ENCODE measurements at regions of chr19 and their contacts with region 1.

Region 1: GRCh38 chr19:6516659-6517291 is 14.1 kb upstream of the TNFSF9 start:
- DNase-seq: peak; percentile 97
- ATAC-seq: peak; percentile 86
- H3K4me3 Mint-ChIP-seq: peak overlapping the region; percentile 79
- H3K27ac Mint-ChIP-seq: peak overlapping the region; percentile 92
- H3K4me1 Mint-ChIP-seq: peaks cover 34% of the 10 kb centered on the region
- H3K27me3 Mint-ChIP-seq: peaks cover 2% of the 10 kb centered on the region

Region 2: GRCh38 chr19:6481541-6482342 is 35.0 kb before region 1 on chr19 and contains the start of gene DENND1C:
- CTCF ChIA-PET with region 1: no interaction called
- POLR2A ChIA-PET with region 1: no interaction called
- intact Hi-C with region 1: loop called in 1 of 2 experiments (anchors 1 kb)
- DNase-seq: peak; percentile 84
- ATAC-seq: peak; percentile 79
- H3K4me3 Mint-ChIP-seq: peak within 1 kb of the TSS; percentile 88
- H3K27ac Mint-ChIP-seq: peak within 1 kb of the TSS; percentile 96
- H3K4me1 Mint-ChIP-seq: peaks cover 25% of the 10 kb centered on the region
- H3K27me3 Mint-ChIP-seq: no peaks in the 10 kb centered on the region
- total RNA-seq, gene DENND1C: 49.5 to 56.3 TPM

Region 3: DNA sequence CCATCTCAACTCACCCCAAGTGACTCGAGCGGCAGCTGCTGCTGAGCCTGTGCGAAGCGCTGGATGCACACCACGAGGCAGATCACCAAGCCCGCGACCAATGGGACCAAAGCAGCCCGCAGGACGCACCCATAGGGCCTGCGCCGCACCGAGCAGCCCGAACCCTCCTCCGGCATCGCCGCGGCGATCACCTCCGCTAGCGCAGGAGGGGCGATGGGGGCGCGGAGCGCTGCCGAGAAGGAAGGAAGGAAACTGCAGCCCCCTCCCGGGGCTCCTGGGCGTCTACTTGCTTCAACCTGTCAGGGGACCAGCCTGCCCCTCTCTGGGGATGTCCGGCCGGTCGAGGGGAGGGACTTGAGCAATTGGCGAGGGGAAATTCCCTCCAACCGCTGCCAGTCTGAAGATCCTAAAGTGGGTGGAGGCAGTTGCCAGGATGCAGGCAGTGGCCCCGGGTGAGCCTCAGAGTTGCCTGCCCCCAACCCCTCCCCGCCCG is 74.1 kb after region 1 on chr19 and contains the start of gene CD70:
- CTCF ChIA-PET with region 1: interaction called, 4 read pairs
- POLR2A ChIA-PET with region 1: no interaction called
- intact Hi-C with region 1: loop called in 1 of 2 experiments (anchors 2 kb)
- DNase-seq: peak; percentile 75
- ATAC-seq: peak; percentile 75
- H3K4me3 Mint-ChIP-seq: peak within 1 kb of the TSS; percentile 67
- H3K27ac Mint-ChIP-seq: no peak within 1 kb of the TSS
- H3K4me1 Mint-ChIP-seq: peaks cover 64% of the 10 kb centered on the region
- H3K27me3 Mint-ChIP-seq: peaks cover 65% of the 10 kb centered on the region
- total RNA-seq, gene CD70: 3.3 to 3.6 TPM

Region 4: DNA sequence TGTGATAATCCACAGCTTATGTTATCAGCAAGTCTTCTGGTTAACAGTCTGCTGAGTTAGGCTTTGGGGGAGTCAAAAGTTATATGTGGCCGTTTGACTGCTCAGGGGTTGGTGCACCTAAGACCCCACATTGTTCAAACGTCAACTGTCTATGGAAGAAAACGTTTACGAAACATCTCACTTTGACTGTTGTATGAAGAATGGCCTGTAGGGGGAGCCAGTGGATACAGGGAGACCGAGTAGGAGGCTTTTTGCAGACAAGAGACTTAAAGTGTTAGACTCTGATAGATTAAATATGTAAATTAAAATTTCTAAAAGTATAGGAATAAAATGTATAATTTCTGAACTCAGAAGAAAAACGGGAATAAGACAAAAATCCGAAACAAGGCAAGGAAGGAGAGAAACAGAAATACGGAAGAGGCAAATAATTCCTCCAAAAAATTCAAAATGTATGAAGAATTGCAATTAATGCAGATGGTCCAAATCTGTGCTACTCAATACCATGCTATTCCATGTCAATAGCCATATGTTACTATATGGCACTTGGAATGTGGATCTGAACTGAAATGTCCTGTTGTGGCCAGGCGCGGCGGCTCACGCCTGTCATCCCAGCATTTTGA is 115.3 kb after region 1 on chr19:
- CTCF ChIA-PET with region 1: interaction called, 8 read pairs
- POLR2A ChIA-PET with region 1: no interaction called
- intact Hi-C with region 1: loop called (anchors 1 to 5 kb)
- DNase-seq: peak; percentile 87
- ATAC-seq: peak; percentile 87
- H3K4me3 Mint-ChIP-seq: no peak overlapping the region
- H3K27ac Mint-ChIP-seq: no peak overlapping the region
- H3K4me1 Mint-ChIP-seq: peaks cover 28% of the 10 kb centered on the region
- H3K27me3 Mint-ChIP-seq: peaks cover 6% of the 10 kb centered on the region

Region 5: GRCh38 chr19:6753178-6754031 is 236.6 kb after region 1 on chr19:
- CTCF ChIA-PET with region 1: interaction called, 3 read pairs
- POLR2A ChIA-PET with region 1: no interaction called
- intact Hi-C with region 1: loop called in 1 of 2 experiments (anchors 1 kb)
- DNase-seq: peak; percentile 93
- ATAC-seq: peak; percentile 94
- H3K4me3 Mint-ChIP-seq: peak overlapping the region; percentile 59
- H3K27ac Mint-ChIP-seq: peak overlapping the region; percentile 47
- H3K4me1 Mint-ChIP-seq: peaks cover 13% of the 10 kb centered on the region
- H3K27me3 Mint-ChIP-seq: no peaks in the 10 kb centered on the region